ENCODE measurements at regions of chr9 and their contacts with region 1.

Region 1: GRCh38 chr9:78035383-78035993 is 3.9 kb upstream of the GNAQ start:
- DNase-seq: peak; percentile 57 to 77
- H3K4me3 ChIP-seq: no peak overlapping the region
- H3K27ac ChIP-seq: peak overlapping the region; percentile 48 to 57
- H3K4me1 ChIP-seq: no peaks in the 10 kb centered on the region
- H3K27me3 ChIP-seq: no peaks in the 10 kb centered on the region
- CTCF ChIP-seq: peak; percentile 84 to 90 (median 86)
- POLR2A ChIP-seq: no peak

Region 2: GRCh38 chr9:77433675-77434445 is 601.6 kb before region 1 on chr9:
- intact Hi-C with region 1: loop called (anchors 10 kb)
- DNase-seq: peak; percentile 68 to 70
- H3K4me3 ChIP-seq: no peak overlapping the region
- H3K27ac ChIP-seq: no peak overlapping the region
- H3K4me1 ChIP-seq: no peaks in the 10 kb centered on the region
- H3K27me3 ChIP-seq: no peaks in the 10 kb centered on the region
- CTCF ChIP-seq: peak; percentile 90 to 97 (median 94)
- POLR2A ChIP-seq: peak in 1 of 2 donors; percentile 9

Measured in uterus (tissue), 4 donors.